ENCODE measurements at regions of chr2 and their contacts with region 1.

Region 1: DNA sequence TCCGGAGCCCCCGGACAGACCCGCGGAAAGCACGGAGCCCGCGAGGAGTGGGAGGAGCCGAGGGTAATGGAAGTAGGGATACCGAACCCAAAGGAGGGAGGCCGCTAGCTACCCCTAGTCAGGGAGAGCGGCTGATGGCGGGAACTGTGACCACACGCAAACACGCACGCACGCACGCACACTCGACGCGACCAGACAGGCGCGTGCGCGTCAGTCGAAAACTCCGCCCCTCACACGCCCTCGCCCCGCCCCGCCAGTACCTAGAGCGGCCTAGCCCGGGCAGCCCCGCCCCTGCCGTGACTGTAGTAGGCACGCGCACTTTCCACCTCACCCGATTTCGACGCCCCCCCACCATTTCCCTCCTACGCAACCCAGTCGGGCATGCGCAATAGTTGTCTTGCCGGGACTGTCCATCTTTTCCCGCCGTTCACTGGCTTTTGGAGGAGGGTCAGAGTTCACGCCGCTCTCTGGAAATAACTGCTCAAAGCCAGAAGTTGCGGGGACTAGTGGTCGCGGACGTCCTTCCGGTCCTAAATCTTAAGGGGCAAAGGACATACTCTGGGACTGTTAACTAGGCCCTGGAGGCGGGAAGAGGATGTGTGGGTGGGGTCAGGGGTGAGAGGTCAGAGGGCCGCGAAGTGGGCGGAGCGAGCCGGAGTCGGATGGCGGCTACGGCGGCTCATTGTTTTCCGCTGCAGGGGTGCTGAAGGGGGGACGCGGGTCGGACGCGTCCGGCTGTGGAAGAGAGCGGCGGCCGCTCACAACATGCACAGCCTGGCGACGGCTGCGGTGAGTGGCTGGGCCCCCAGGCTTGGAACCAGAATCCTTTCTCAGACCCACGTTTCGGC is at the starts of genes CNOT9 and USP37:
- DNase-seq: peak; percentile 100
- H3K4me3 Mint-ChIP-seq: peak within 1 kb of the TSS; percentile 91
- H3K27ac Mint-ChIP-seq: peak within 1 kb of the TSS; percentile 100
- H3K4me1 Mint-ChIP-seq: peaks cover 60% of the 10 kb centered on the region
- H3K27me3 Mint-ChIP-seq: no peaks in the 10 kb centered on the region
- total RNA-seq, gene CNOT9: 74.3 to 78.6 TPM
- total RNA-seq, gene USP37: 21.7 to 23.2 TPM

Region 2: DNA sequence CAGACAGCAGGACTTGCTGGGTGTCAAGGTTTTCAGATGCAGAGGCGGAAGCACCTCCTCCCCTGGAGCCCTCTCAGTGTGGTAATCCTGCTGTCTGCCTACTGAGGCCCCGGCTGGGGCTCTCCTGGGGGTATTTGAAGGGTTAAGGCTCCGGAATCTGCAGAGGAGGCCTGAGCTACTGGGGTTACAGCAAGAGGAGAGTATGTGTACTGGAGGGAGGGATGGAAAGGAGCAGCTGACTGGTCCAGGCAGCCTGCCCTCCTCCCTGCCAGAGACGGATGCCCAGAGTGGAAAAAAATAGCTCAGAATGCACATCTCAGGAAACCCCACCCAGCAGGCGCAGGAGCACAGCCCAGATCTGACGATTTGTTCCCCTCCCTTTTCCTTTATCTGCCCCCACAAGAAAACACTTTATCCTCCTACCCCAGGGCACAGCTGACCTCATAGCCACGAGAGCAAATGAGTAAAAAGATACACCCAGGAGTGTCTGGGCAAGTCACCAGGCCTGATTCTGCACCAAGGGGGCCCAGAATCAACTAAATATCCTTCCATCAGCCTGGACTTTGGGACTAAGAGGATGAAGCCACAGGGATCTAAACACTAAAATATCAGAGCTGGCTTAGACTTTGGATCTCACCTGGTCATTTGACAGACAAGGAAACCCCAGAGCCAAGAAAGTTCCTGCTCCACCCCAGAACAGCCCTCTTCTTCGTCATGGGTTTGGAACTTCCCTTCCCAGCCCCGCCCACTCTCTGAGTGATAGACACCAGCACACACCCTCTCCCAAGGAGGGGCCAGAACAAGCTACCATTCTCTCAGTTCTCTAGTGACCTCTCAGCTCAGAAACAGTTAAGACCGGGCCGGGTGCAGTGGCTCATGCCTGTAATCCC is 281.6 kb before region 1 on chr2:
- CTCF ChIA-PET with region 1: no interaction called
- intact Hi-C with region 1: loop called (anchors 1 kb)
- DNase-seq: peak; percentile 95
- H3K4me3 Mint-ChIP-seq: peak overlapping the region; percentile 80
- H3K27ac Mint-ChIP-seq: peak overlapping the region; percentile 98
- H3K4me1 Mint-ChIP-seq: peaks cover 73% of the 10 kb centered on the region
- H3K27me3 Mint-ChIP-seq: no peaks in the 10 kb centered on the region

Region 3: DNA sequence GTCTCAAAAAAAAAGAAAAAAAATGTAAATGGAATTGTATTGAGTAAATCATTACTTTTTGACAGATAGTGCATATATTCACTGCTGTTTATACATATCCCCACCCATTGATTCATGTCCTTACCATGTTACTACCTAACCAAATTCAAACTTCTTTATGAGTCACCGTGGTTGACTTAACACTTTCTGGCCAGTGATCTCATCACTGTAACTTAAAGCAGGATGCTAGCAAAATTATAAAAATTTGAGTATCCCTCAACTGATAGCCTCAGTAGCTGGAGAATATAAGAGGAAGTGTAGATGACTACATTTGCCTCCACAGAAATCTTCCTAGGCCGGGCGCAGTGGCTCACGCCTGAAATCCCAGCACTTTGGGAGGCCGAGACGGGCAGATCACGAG is 13.7 kb after region 1 on chr2:
- CTCF ChIA-PET with region 1: no interaction called
- intact Hi-C with region 1: loop called (anchors 1 kb)
- DNase-seq: peak; percentile 26
- H3K4me3 Mint-ChIP-seq: no peak overlapping the region
- H3K27ac Mint-ChIP-seq: no peak overlapping the region
- H3K4me1 Mint-ChIP-seq: peaks cover 37% of the 10 kb centered on the region
- H3K27me3 Mint-ChIP-seq: no peaks in the 10 kb centered on the region

Region 4: GRCh38 chr2:218671654-218672566 is 103.5 kb after region 1 on chr2 and contains the starts of genes RNF25 and STK36:
- CTCF ChIA-PET with region 1: interaction called, 3 read pairs
- intact Hi-C with region 1: loop called (anchors 1 kb)
- DNase-seq: peak; percentile 86
- H3K4me3 Mint-ChIP-seq: peak within 1 kb of the TSS; percentile 98
- H3K27ac Mint-ChIP-seq: peak within 1 kb of the TSS; percentile 90
- H3K4me1 Mint-ChIP-seq: peaks cover 22% of the 10 kb centered on the region
- H3K27me3 Mint-ChIP-seq: no peaks in the 10 kb centered on the region
- total RNA-seq, gene RNF25: 9.6 to 10.4 TPM
- total RNA-seq, gene STK36: 14.7 to 15.1 TPM

Region 5: DNA sequence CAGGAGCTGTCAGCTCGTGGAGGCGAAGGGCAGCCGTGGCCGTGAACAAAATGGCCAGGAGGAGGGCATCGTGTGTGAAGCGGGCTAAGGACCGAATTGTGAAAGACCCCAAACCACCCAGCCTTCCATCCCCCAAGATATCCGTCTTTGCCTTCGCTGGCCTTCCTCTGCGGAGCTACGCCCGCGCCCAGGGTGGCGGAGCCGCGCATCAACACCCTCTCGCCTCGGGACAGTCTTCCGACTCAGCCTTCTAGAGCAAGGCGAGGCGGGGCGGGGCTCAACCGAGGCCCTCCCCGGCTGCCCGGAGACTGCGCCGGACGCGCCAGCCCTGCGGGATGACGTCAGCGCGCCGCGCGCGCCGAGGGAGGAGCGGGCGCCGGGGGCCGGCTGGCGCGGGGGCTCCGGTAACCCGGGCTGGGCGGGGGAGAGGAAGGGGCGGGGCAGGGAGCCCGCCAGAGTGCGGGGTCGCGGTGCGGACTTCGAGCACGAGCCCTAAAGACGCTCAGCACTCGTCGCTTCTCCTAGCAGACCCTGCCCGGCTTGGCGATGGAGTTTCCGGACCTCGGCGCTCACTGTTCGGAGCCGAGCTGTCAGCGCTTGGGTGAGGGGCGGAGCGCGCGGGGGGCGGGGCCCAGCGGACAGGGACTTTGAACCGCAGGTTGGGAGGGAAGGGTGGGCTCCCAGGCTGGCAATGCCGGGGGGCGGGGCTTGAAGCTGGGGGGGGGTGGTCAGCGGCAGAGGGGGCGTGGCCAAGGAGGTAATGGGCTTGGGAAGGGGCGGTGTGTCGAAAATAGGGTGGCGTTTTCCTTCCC is 638.2 kb after region 1 on chr2 and contains the start of gene ZFAND2B:
- CTCF ChIA-PET with region 1: no interaction called
- intact Hi-C with region 1: loop called (anchors 1 kb)
- DNase-seq: peak; percentile 94
- H3K4me3 Mint-ChIP-seq: peak within 1 kb of the TSS; percentile 94
- H3K27ac Mint-ChIP-seq: peak within 1 kb of the TSS; percentile 96
- H3K4me1 Mint-ChIP-seq: peaks cover 32% of the 10 kb centered on the region
- H3K27me3 Mint-ChIP-seq: no peaks in the 10 kb centered on the region
- total RNA-seq, gene ZFAND2B: 32.6 to 33.6 TPM

Measured in activated naive CD4-positive, alpha-beta T cell treated with anti-CD3 and anti-CD28 coated beads for 36 hours (primary cell).